ENCODE measurements at regions of chr4 and their contacts with region 1.

Region 1: GRCh38 chr4:90799894-90800293 is 672.7 kb downstream of the CCSER1 start:
- DNase-seq: no peak
- ATAC-seq: peak; percentile 47; the same call in 1 of the 2 replicates
- H3K4me3 ChIP-seq: no peak overlapping the region
- H3K27ac ChIP-seq: no peak overlapping the region
- H3K4me1 ChIP-seq: no peaks in the 10 kb centered on the region
- H3K27me3 ChIP-seq: no peaks in the 10 kb centered on the region
- CTCF ChIP-seq: peak in 2 of 3 experiments; percentile 13 to 18; a peak in 2 of 6 replicates
- POLR2A ChIP-seq: no peak
- RAD21 ChIP-seq: peak; percentile 33; the same call in 1 of the 2 replicates

Region 2: GRCh38 chr4:91085961-91086360 is 286.1 kb after region 1 on chr4:
- CTCF ChIA-PET with region 1: no interaction called
- POLR2A ChIA-PET with region 1: no interaction called
- RAD21 ChIA-PET with region 1: no interaction called
- intact Hi-C with region 1: no loop called
- DNase-seq: no peak
- ATAC-seq: no peak
- H3K4me3 ChIP-seq: no peak overlapping the region
- H3K27ac ChIP-seq: no peak overlapping the region
- H3K4me1 ChIP-seq: no peaks in the 10 kb centered on the region
- H3K27me3 ChIP-seq: no peaks in the 10 kb centered on the region
- CTCF ChIP-seq: no peak
- POLR2A ChIP-seq: no peak
- RAD21 ChIP-seq: no peak

Region 3: GRCh38 chr4:91212211-91212610 is 412.3 kb after region 1 on chr4:
- CTCF ChIA-PET with region 1: no interaction called
- POLR2A ChIA-PET with region 1: no interaction called
- RAD21 ChIA-PET with region 1: no interaction called
- intact Hi-C with region 1: loop called (anchors 1 kb)
- DNase-seq: no peak
- ATAC-seq: no peak
- H3K4me3 ChIP-seq: no peak overlapping the region
- H3K27ac ChIP-seq: no peak overlapping the region
- H3K4me1 ChIP-seq: no peaks in the 10 kb centered on the region
- H3K27me3 ChIP-seq: no peaks in the 10 kb centered on the region
- CTCF ChIP-seq: no peak
- POLR2A ChIP-seq: no peak
- RAD21 ChIP-seq: no peak

Region 4: DNA sequence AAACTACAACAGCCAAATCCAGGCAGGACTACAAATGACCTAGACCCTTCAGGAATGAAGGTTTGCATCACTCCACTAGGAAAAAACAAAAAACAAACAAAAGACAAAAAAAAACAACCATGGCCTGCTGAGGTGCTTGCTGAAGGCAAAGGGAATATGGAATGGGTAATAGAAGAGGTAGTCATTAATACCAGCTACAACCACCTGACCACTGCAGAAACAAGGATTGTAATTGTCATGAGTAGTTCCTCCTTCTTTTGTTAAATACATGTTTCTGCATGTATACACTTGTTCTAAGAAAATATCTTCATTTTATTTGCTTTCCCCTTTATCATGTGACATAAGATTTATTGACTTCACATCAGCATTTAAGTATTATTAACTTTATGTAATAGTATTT is 1094.1 kb after region 1 on chr4:
- CTCF ChIA-PET with region 1: no interaction called
- POLR2A ChIA-PET with region 1: no interaction called
- RAD21 ChIA-PET with region 1: no interaction called
- intact Hi-C with region 1: loop called (anchors 10 kb)
- DNase-seq: no peak
- ATAC-seq: no peak
- H3K4me3 ChIP-seq: no peak overlapping the region
- H3K27ac ChIP-seq: no peak overlapping the region
- H3K4me1 ChIP-seq: no peaks in the 10 kb centered on the region
- H3K27me3 ChIP-seq: no peaks in the 10 kb centered on the region
- CTCF ChIP-seq: no peak
- POLR2A ChIP-seq: no peak
- RAD21 ChIP-seq: no peak